B cell (primary cell): ENCODE measurements at regions of chr11 and their contacts with region 1.

Region 1: GRCh38 chr11:68459886-68460740 is 439 bp upstream of the PPP6R3 start:
- DNase-seq: peak; percentile 97
- ATAC-seq: peak; percentile 90
- H3K4me3 ChIP-seq: peak overlapping the region; percentile 82 to 96 (median 90)
- H3K4me3 Mint-ChIP-seq: peak overlapping the region; percentile 96
- H3K27ac ChIP-seq: peak overlapping the region; percentile 95 to 96
- H3K27ac Mint-ChIP-seq: peak overlapping the region; percentile 97
- H3K4me1 ChIP-seq: peaks cover 29 to 31% of the 10 kb centered on the region in 2 donors
- H3K4me1 Mint-ChIP-seq: peaks cover 40% of the 10 kb centered on the region
- H3K27me3 ChIP-seq: no peaks in the 10 kb centered on the region
- H3K27me3 Mint-ChIP-seq: no peaks in the 10 kb centered on the region
- CTCF ChIP-seq: no peak

Region 2: DNA sequence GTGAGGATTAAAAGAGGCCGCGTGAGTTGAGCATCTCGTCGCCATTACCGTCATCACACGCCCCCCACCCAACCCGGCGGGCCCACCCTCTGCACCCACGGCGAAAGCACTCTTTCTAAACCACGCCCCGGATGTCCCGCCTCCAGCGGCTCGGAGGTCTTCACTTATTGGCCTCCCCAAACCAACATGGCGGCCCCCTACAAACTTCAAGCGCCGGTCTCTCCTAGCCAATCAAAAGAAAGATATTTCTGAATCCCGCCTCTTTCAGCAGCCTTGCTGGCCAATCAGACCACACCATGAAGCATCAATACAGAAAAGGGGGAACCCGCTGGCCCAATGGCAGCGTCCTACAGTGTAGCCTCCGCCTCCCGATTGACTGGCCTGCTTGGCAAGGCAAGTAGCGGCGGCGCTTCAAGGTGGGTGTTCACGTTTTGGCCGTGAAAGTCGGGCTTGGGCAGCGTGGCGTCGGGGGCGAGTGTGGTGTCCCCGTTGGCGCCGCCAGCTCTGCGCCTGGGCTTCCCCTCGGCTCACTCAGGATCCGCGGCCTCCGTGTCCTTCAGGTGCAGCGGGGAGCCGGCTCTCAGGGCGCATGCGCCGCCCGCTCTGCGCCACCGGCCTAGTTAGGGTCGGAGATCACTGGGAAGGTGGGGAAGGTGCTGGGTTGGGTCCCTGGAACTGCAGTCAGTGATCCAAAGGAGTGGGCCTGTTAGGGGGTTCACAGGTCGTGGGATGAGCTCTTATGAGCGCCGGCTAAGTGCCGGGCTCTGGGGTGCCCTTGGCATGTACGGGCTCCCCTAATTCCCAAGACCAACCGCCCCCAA is 429.6 kb before region 1 on chr11 and contains the start of gene NDUFS8:
- CTCF ChIA-PET with region 1: no interaction called
- POLR2A ChIA-PET with region 1: no interaction called
- intact Hi-C with region 1: loop called (anchors 10 kb)
- DNase-seq: peak; percentile 98
- ATAC-seq: peak; percentile 96
- H3K4me3 ChIP-seq: peak within 1 kb of the TSS; percentile 56 to 90 (median 81)
- H3K4me3 Mint-ChIP-seq: peak within 1 kb of the TSS; percentile 100
- H3K27ac ChIP-seq: peak within 1 kb of the TSS; percentile 57 to 78
- H3K27ac Mint-ChIP-seq: peak within 1 kb of the TSS; percentile 94
- H3K4me1 ChIP-seq: peaks cover 12 to 20% of the 10 kb centered on the region in 2 donors
- H3K4me1 Mint-ChIP-seq: peaks cover 21% of the 10 kb centered on the region
- H3K27me3 ChIP-seq: no peaks in the 10 kb centered on the region
- H3K27me3 Mint-ChIP-seq: no peaks in the 10 kb centered on the region
- CTCF ChIP-seq: no peak
- total RNA-seq, gene NDUFS8: 73.9 and 75.2 TPM in 2 replicates

Region 3: DNA sequence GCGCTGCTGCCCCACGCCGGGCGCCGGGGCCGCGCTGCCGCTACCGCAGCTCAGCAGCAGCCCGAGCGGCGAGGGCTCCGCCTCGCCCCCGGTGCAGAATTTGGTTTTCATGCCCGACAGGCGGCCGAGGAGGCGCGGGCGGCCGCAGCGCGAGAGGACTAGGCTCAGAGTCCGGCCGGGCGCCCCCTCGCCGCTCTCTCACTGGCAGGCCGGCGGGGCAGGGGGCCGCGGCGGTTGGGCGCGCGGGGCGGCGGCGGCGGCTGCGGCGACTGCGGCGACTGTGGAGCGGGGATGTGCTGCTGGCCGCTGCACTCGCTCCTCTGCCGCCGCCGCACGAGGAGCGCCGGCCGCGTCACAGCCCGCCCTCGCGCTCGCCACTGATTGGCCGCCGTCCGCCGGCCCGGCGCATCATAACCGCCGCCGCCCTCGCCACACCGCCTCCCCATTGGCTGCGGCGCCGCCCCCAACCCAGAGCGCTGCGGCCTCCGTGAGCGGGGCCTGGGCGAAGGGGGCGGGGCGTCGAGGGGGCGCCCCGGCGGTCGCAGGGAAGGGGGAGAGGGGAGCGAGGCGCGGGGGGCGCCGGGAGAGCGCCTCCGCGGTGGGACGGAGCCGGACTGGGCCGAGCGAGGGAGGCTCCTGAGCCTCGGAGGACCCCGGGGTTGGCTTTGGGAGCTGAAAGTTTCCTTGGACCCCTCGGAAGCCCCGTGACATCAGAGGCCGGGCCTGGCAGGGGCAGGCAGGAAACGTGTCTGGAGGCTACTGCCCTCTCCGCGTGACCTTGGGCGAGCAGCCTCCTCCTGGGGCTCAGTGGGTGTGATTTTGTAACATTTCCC is 338.8 kb before region 1 on chr11 and contains the start of gene CHKA:
- CTCF ChIA-PET with region 1: no interaction called
- POLR2A ChIA-PET with region 1: no interaction called
- intact Hi-C with region 1: loop called (anchors 2 kb)
- DNase-seq: peak; percentile 94
- ATAC-seq: peak; percentile 93
- H3K4me3 ChIP-seq: peak within 1 kb of the TSS; percentile 65 to 78 (median 66)
- H3K4me3 Mint-ChIP-seq: peak within 1 kb of the TSS; percentile 95
- H3K27ac ChIP-seq: peak within 1 kb of the TSS; percentile 82 to 86
- H3K27ac Mint-ChIP-seq: peak within 1 kb of the TSS; percentile 95
- H3K4me1 ChIP-seq: peaks cover 21 to 29% of the 10 kb centered on the region in 2 donors
- H3K4me1 Mint-ChIP-seq: peaks cover 27% of the 10 kb centered on the region
- H3K27me3 ChIP-seq: no peaks in the 10 kb centered on the region
- H3K27me3 Mint-ChIP-seq: no peaks in the 10 kb centered on the region
- CTCF ChIP-seq: no peak
- total RNA-seq, gene CHKA: 20.6 and 24.9 TPM in 2 replicates

Region 4: GRCh38 chr11:69048718-69049489 is 588.8 kb after region 1 on chr11 and contains the start of gene TPCN2:
- CTCF ChIA-PET with region 1: no interaction called
- POLR2A ChIA-PET with region 1: interaction called, 6 read pairs
- intact Hi-C with region 1: loop called (anchors 10 kb)
- DNase-seq: peak; percentile 97
- ATAC-seq: peak; percentile 98
- H3K4me3 ChIP-seq: peak within 1 kb of the TSS; percentile 34 to 99 (median 86)
- H3K4me3 Mint-ChIP-seq: peak within 1 kb of the TSS; percentile 85
- H3K27ac ChIP-seq: peak within 1 kb of the TSS; percentile 75 to 98
- H3K27ac Mint-ChIP-seq: peak within 1 kb of the TSS; percentile 82
- H3K4me1 ChIP-seq: peaks cover 17 to 54% of the 10 kb centered on the region in 2 donors
- H3K4me1 Mint-ChIP-seq: peaks cover 38% of the 10 kb centered on the region
- H3K27me3 ChIP-seq: no peaks in the 10 kb centered on the region
- H3K27me3 Mint-ChIP-seq: peaks cover 9% of the 10 kb centered on the region
- CTCF ChIP-seq: no peak
- total RNA-seq, gene TPCN2: 71.4 and 76.2 TPM in 2 replicates